Naive thymus-derived CD4-positive, alpha-beta T cell (primary cell): ENCODE measurements at regions of chr6 and their contacts with region 1.

Region 1: DNA sequence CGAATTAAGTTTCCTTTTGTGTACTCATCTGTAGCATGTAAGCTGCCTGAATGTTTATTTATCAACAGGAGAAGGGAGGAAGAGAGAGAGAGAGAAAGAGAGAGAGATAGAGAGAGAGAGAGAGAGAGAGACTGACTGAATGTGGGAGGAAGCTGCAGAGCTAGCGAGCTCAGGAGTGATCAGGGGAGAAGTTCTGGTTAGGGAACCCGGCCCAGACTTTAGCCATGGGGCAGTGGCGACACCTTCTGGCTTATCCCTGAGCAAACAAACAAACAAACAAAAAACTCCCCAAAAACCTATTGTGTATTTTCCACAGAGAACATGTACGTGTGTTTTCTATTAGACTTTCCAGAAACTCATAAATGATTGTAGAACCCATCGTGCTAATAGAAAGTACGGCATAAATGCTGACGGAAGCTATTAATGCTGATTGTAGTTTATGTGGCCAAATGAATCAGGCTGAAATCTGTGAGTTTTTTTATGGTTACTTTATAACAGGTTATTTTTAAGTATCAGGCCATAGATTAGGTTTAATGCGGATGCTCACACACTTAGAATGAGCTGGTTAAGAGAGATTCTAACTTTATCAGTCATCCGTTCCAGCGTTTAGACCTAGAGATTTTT is 92.8 kb downstream of the CLIC5 start:
- DNase-seq: peak in 8 of 9 donors; percentile 13 to 59 (median 36)
- ATAC-seq: peak; percentile 67
- H3K4me3 ChIP-seq: no peak overlapping the region
- H3K4me3 Mint-ChIP-seq: no peak overlapping the region
- H3K27ac ChIP-seq: no peak overlapping the region
- H3K27ac Mint-ChIP-seq: peak overlapping the region in 2 of 9 donors; percentile 28 to 75
- H3K4me1 ChIP-seq: no peaks in the 10 kb centered on the region
- H3K4me1 Mint-ChIP-seq: peaks cover 0 to 42% (median 3%) of the 10 kb centered on the region in 7 donors
- H3K27me3 ChIP-seq: no peaks in the 10 kb centered on the region
- H3K27me3 Mint-ChIP-seq: peaks cover 0 to 11% (median 0%) of the 10 kb centered on the region in 5 donors

Region 2: DNA sequence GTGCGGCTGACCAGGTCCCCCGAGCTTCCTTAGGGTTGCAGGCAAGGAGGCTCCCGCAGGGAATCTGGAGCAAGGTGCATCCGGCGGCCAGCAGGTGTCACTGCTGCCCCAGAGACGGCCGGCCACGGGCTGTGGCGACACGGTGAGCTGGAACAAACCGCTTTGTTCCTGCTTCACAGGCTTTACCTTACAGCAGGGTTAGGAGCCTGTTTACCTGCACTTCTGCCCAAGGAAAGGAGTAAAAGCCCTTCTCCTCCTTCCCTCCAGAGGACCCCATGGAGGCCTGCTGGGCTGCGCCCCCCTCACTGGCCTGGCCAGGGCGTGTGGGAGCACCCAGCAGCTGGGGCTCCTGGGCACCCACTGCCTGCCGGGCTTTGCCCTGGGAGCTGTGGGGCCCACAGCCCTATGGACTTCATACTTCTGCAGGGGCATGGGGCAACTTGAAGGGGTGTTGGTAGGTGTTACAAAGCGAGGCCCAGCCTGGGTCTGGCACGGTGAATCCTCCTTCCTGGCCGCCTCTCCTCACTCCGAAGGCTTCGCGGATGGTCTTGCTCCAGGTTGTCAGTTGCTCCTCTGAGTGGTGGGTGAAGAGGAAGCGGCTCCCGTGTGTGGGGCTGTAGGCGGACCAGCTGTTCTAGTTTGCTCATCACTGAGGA is 1446.9 kb before region 1 on chr6:
- CTCF ChIA-PET with region 1: interaction called, 25 read pairs
- POLR2A ChIA-PET with region 1: no interaction called
- intact Hi-C with region 1: loop called (anchors 1 kb)
- DNase-seq: peak; percentile 38 to 78 (median 64)
- ATAC-seq: peak; percentile 82
- H3K4me3 ChIP-seq: no peak overlapping the region
- H3K4me3 Mint-ChIP-seq: no peak overlapping the region
- H3K27ac ChIP-seq: no peak overlapping the region
- H3K27ac Mint-ChIP-seq: no peak overlapping the region
- H3K4me1 ChIP-seq: peaks cover 0 to 9% of the 10 kb centered on the region in 2 donors
- H3K4me1 Mint-ChIP-seq: peaks cover 0 to 2% (median 0%) of the 10 kb centered on the region in 7 donors
- H3K27me3 ChIP-seq: no peaks in the 10 kb centered on the region
- H3K27me3 Mint-ChIP-seq: peaks cover 0 to 8% (median 0%) of the 10 kb centered on the region in 5 donors

Region 3: DNA sequence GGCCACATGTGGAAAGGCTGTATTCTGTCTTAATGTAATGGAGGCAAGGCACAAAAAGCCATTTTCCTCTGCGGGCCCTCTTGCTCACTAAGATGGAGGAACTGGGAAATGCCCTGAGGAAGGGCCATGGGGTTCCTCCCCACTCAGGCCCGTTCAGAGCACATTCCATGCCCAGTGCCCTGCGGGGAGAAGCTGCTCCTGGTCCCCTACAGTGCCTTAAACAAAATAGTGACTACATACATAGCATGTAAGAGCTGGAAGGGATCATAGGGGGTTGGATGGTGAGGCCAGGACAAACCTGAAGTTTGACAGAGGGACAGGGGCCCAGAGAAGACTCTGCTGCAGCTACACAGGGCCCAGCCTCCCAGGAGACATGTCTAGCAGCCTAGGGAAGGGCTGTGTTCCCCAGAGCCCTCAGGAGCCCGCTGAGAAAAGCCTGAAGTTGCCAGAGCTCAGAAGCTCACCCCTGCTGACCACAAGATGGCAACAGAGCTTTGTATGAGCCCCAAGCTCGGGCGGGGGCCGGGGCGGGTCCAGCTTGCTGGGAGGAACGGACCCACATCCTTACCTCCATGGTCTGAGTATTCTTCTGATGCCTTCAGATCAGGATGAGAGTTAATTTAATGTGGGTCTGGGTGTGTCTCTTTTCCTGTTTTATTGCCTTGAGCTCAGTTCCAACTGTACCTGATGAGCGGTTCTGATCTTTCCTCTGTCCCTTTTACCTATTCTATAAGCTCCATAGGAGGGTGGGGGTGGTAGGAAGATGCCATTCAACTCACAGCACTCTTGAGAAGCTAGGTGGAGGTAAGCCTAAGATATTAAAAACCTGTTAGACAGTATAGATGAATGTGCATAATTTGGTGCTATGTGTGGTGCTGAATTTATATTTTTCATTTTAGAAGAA is 1292.5 kb before region 1 on chr6:
- CTCF ChIA-PET with region 1: no interaction called
- POLR2A ChIA-PET with region 1: no interaction called
- intact Hi-C with region 1: loop called in 1 of 2 experiments (anchors 1 kb)
- DNase-seq: peak in 1 of 9 donors; percentile 40
- ATAC-seq: peak; percentile 47
- H3K4me3 ChIP-seq: no peak overlapping the region
- H3K4me3 Mint-ChIP-seq: peak overlapping the region in 1 of 10 donors; percentile 18
- H3K27ac ChIP-seq: no peak overlapping the region
- H3K27ac Mint-ChIP-seq: no peak overlapping the region
- H3K4me1 ChIP-seq: no peaks in the 10 kb centered on the region
- H3K4me1 Mint-ChIP-seq: peaks cover 7 to 23% (median 11%) of the 10 kb centered on the region in 7 donors
- H3K27me3 ChIP-seq: no peaks in the 10 kb centered on the region
- H3K27me3 Mint-ChIP-seq: peaks cover 0 to 13% (median 6%) of the 10 kb centered on the region in 5 donors

Region 4: GRCh38 chr6:45514454-45515230 is 408.2 kb before region 1 on chr6:
- CTCF ChIA-PET with region 1: no interaction called
- POLR2A ChIA-PET with region 1: no interaction called
- intact Hi-C with region 1: no loop called
- DNase-seq: no peak
- ATAC-seq: no peak
- H3K4me3 ChIP-seq: no peak overlapping the region
- H3K4me3 Mint-ChIP-seq: no peak overlapping the region
- H3K27ac ChIP-seq: no peak overlapping the region
- H3K27ac Mint-ChIP-seq: no peak overlapping the region
- H3K4me1 ChIP-seq: no peaks in the 10 kb centered on the region
- H3K4me1 Mint-ChIP-seq: peaks cover 0 to 5% (median 0%) of the 10 kb centered on the region in 7 donors
- H3K27me3 ChIP-seq: no peaks in the 10 kb centered on the region
- H3K27me3 Mint-ChIP-seq: no peaks in the 10 kb centered on the region

Region 5: DNA sequence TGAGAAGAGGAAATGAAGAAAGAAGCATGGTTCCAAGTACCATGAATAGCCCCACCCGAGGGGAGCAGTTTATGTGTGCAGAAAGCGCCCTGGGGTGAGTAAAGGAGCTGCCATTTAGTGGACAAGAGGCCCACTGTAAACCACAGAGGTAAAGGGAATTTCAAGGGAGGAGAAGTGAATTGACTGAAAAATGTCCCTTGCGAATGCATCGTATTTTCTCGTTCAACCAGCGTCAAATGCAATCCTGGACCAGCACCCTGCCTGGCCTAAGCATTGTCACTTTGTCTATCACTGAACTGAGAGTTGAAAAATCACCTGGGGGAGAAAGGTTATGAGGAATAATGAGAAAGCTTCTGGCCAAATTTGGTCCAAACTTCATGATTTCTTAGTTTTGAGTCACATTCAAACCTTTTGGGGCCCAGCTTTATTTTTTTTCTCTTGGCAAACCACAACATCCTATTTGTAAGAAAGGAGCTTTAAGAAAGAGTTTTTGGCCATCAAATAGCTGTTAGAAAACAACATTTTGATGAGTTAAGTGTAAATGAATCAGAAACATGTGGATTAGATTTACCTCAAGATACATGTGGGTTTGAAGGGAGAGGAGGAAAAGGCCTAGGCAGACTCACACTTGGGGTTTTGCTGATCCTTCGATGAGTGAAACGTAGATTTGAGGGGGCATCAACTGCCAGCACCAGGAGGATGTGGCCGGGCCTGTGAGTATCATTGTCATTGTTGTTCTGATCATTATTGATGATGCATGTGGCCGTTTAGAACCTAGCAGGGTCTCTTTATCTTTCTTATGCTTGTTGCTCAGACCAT is 121.2 kb before region 1 on chr6:
- CTCF ChIA-PET with region 1: no interaction called
- POLR2A ChIA-PET with region 1: no interaction called
- intact Hi-C with region 1: loop called in 1 of 2 experiments (anchors 5 kb)
- DNase-seq: peak in 1 of 9 donors; percentile 59
- ATAC-seq: no peak
- H3K4me3 ChIP-seq: no peak overlapping the region
- H3K4me3 Mint-ChIP-seq: peak overlapping the region in 1 of 10 donors; percentile 43
- H3K27ac ChIP-seq: no peak overlapping the region
- H3K27ac Mint-ChIP-seq: peak overlapping the region in 1 of 9 donors; percentile 79
- H3K4me1 ChIP-seq: no peaks in the 10 kb centered on the region
- H3K4me1 Mint-ChIP-seq: peaks cover 0 to 24% (median 0%) of the 10 kb centered on the region in 7 donors
- H3K27me3 ChIP-seq: no peaks in the 10 kb centered on the region
- H3K27me3 Mint-ChIP-seq: no peaks in the 10 kb centered on the region

Region 6: GRCh38 chr6:45997875-45998506 is 75.2 kb after region 1 on chr6:
- CTCF ChIA-PET with region 1: no interaction called
- POLR2A ChIA-PET with region 1: no interaction called
- intact Hi-C with region 1: no loop called
- DNase-seq: no peak
- ATAC-seq: no peak
- H3K4me3 ChIP-seq: no peak overlapping the region
- H3K4me3 Mint-ChIP-seq: no peak overlapping the region
- H3K27ac ChIP-seq: no peak overlapping the region
- H3K27ac Mint-ChIP-seq: no peak overlapping the region
- H3K4me1 ChIP-seq: no peaks in the 10 kb centered on the region
- H3K4me1 Mint-ChIP-seq: peaks cover 0 to 2% (median 0%) of the 10 kb centered on the region in 7 donors
- H3K27me3 ChIP-seq: no peaks in the 10 kb centered on the region
- H3K27me3 Mint-ChIP-seq: peaks cover 0 to 2% (median 0%) of the 10 kb centered on the region in 5 donors